ENCODE measurements at regions of chr1 and their contacts with region 1.

Region 1: DNA sequence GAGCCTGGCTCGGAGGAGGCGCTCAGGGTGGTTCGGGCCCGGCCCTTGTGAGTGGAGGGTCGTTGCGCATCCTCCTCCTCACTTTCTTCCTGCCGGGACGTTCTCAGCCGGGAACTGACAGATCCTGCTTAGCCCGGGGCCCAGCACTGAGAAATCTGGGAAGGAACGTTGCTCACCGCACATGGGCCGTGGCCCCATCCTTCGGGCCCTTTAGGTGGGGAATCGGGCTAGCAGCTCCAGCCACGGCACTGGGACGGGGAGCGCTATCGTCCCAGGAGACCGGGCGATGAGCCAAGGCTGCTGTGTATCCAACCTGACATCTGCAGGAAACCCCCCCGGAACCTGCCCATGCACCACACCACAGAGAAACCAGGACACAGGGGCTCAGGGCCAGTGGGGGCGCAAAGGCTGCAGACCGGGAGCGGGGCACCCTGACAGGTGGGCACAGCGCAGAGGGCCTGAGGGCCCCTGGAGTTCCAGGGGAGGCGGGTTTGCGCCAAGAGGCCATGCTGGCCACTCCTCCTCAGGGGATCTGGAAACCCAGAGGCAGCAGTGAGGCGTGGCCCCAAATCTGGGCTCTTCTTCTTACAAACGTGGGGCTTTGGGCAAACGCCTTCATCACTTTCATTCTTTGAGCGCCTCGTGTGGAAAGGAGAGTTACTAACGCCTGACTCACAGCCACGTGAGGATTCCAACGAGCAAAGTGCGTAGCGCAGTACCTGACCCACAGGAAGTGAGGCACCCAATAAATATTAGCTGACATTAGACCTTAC is at the start of gene SH2D5:
- DNase-seq: peak in 8 of 9 donors; percentile 21 to 62 (median 47)
- ATAC-seq: peak; percentile 85
- H3K4me3 ChIP-seq: peak within 1 kb of the TSS; percentile 63
- H3K4me3 Mint-ChIP-seq: peak within 1 kb of the TSS; percentile 86 to 95 (median 88)
- H3K27ac ChIP-seq: no peak within 1 kb of the TSS
- H3K27ac Mint-ChIP-seq: peak within 1 kb of the TSS in 6 of 9 donors; percentile 28 to 83 (median 60)
- H3K4me1 ChIP-seq: peaks cover 8 to 14% of the 10 kb centered on the region in 2 donors
- H3K4me1 Mint-ChIP-seq: peaks cover 10 to 23% (median 17%) of the 10 kb centered on the region in 7 donors
- H3K27me3 ChIP-seq: peaks cover 0 to 8% of the 10 kb centered on the region in 2 donors
- H3K27me3 Mint-ChIP-seq: peaks cover 10 to 49% (median 21%) of the 10 kb centered on the region in 5 donors
- total RNA-seq, gene SH2D5: 0.35 TPM in 2 of 5 experiments, not detected in the others

Region 2: DNA sequence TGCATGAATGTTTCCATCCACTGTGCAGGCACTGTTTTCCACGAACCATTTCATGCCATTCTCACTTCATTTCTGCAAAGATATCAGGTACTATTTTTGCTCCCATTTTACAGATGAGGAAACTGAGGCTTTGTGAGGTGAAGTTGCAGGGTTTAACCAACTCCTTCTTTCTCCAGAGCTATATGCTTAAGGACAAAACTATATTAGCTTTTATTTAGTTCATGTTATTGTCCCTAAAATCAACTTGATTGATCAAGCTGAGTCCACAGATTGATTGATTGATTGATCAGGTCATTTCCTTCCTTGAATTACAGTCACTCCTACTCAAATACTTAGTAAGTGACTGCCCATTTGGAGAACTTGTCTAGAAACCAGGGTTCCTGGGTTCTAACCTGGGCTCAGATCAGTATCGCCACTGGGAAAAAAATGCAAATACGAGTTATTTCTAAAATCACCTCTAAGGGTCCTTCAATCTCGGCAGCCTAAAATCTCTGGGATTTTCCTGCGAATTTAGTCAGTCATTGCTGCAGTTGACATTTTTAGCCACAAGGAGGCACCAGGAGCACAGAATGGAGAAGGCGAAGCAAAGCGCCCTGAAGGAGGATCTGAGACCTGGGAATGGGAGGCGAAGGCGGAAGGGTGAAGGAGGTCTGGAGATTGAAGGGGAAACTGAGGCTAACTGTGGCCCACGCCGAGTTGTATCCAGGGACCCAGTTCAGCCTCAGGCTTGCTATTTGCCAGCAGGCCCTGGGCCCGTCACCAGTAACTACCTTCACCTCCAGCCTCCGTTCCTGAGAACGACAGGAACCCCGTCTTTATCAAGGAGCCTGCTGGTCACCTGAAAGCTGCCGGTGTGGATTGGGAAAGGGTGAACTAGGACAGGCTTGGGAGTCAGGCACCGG is 210.6 kb before region 1 on chr1:
- CTCF ChIA-PET with region 1: no interaction called
- POLR2A ChIA-PET with region 1: no interaction called
- intact Hi-C with region 1: loop called in 1 of 2 experiments (anchors 2 kb)
- DNase-seq: peak; percentile 28 to 64 (median 55)
- ATAC-seq: peak; percentile 67
- H3K4me3 ChIP-seq: no peak overlapping the region
- H3K4me3 Mint-ChIP-seq: no peak overlapping the region
- H3K27ac ChIP-seq: no peak overlapping the region
- H3K27ac Mint-ChIP-seq: peak overlapping the region in 1 of 9 donors; percentile 44
- H3K4me1 ChIP-seq: no peaks in the 10 kb centered on the region
- H3K4me1 Mint-ChIP-seq: peaks cover 0 to 4% (median 0%) of the 10 kb centered on the region in 7 donors
- H3K27me3 ChIP-seq: peaks cover 0 to 3% of the 10 kb centered on the region in 2 donors
- H3K27me3 Mint-ChIP-seq: peaks cover 7 to 25% (median 22%) of the 10 kb centered on the region in 5 donors

Region 3: DNA sequence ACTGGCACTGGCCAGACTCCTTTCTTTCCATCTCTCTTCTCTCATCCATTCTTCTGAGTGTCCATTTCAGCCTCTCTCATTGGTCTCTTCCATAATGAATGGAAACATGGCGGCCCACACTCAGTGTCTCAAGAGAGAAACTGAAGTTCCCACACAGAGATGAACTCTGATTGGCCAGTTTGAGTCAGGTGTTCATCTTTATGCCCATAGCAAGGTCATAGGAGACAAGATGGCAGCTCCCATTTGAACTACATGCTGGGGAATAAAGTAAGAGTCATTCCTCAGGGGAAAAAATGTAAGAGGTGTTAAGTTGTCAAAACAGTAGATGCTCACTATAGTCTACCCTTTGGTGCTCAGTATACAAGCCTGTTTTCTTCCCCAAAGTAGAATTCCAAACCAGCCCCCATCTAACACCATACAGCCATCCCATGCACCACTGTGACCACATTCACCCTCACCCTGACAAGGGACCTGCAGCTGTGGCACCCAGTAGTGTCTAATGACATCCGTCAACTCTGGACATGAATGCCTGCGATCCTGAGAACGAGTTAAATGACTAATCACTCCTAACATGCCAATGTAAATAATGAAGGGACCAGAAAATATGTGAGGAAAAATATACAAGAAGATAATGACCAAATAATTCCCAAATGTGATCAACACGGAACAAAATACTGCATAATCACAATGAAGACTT is 131.5 kb before region 1 on chr1:
- CTCF ChIA-PET with region 1: no interaction called
- POLR2A ChIA-PET with region 1: no interaction called
- intact Hi-C with region 1: no loop called
- DNase-seq: no peak
- ATAC-seq: no peak
- H3K4me3 ChIP-seq: no peak overlapping the region
- H3K4me3 Mint-ChIP-seq: no peak overlapping the region
- H3K27ac ChIP-seq: no peak overlapping the region
- H3K27ac Mint-ChIP-seq: no peak overlapping the region
- H3K4me1 ChIP-seq: no peaks in the 10 kb centered on the region
- H3K4me1 Mint-ChIP-seq: peaks cover 0 to 2% (median 0%) of the 10 kb centered on the region in 7 donors
- H3K27me3 ChIP-seq: no peaks in the 10 kb centered on the region
- H3K27me3 Mint-ChIP-seq: peaks cover 0 to 10% (median 5%) of the 10 kb centered on the region in 5 donors

Region 4: DNA sequence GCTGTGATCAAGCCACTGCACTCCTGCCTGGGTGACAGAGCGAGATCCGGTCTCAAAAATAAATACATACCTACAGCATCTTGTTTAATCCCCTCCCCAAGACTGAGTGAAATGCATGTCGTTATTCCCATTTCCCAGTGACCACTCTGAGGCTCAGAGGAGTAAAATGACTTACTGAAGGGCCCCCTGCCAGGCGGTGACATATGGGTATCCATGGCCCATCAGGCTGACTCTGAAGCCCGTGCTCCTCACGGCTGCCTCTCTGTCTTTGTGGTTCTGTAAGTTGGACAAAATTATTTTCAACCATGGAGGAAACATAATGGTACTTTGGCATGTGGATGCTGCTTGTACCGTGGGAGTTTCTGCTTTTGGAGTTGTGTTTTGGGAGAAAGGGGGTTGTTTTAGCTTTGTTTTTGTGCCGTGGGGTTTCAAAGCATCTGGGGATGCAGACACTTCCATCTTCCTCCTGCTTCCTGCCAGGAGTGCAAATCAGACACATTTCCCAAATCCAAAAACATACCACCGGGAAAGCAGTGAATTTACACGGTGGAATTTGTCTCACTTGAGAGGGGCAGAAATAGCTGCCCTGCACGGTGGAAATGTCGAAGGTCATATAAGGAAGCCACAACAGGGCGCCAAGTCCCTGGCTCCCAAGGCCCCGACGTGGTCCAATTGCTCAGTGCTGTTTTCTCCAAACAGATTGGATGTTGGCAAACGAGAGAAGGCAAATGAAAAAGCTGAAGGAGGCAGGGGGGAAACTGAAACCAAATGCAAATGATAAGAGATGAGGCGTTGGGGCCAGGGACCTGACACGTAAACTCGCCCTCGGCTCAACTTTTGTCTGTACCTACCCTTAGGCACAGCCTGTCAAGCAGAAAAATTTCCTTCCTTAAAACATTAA is 116.6 kb before region 1 on chr1:
- CTCF ChIA-PET with region 1: no interaction called
- POLR2A ChIA-PET with region 1: no interaction called
- intact Hi-C with region 1: no loop called
- DNase-seq: no peak
- ATAC-seq: no peak
- H3K4me3 ChIP-seq: no peak overlapping the region
- H3K4me3 Mint-ChIP-seq: peak overlapping the region in 1 of 10 donors; percentile 22
- H3K27ac ChIP-seq: no peak overlapping the region
- H3K27ac Mint-ChIP-seq: no peak overlapping the region
- H3K4me1 ChIP-seq: no peaks in the 10 kb centered on the region
- H3K4me1 Mint-ChIP-seq: peaks cover 0 to 8% (median 0%) of the 10 kb centered on the region in 7 donors
- H3K27me3 ChIP-seq: no peaks in the 10 kb centered on the region
- H3K27me3 Mint-ChIP-seq: peaks cover 0 to 17% (median 7%) of the 10 kb centered on the region in 5 donors

Region 5: GRCh38 chr1:20661207-20662109 is 71.3 kb before region 1 on chr1 and contains the start of gene DDOST:
- CTCF ChIA-PET with region 1: no interaction called
- POLR2A ChIA-PET with region 1: interaction called, 3 read pairs
- intact Hi-C with region 1: loop called in 1 of 2 experiments (anchors 1 kb)
- DNase-seq: peak; percentile 78 to 96 (median 94)
- ATAC-seq: peak; percentile 98
- H3K4me3 ChIP-seq: peak within 1 kb of the TSS; percentile 93
- H3K4me3 Mint-ChIP-seq: peak within 1 kb of the TSS; percentile 89 to 99 (median 96)
- H3K27ac ChIP-seq: peak within 1 kb of the TSS; percentile 87
- H3K27ac Mint-ChIP-seq: peak within 1 kb of the TSS; percentile 85 to 99 (median 98)
- H3K4me1 ChIP-seq: peaks cover 21 to 24% of the 10 kb centered on the region in 2 donors
- H3K4me1 Mint-ChIP-seq: peaks cover 31 to 60% (median 41%) of the 10 kb centered on the region in 7 donors
- H3K27me3 ChIP-seq: no peaks in the 10 kb centered on the region
- H3K27me3 Mint-ChIP-seq: no peaks in the 10 kb centered on the region
- total RNA-seq, gene DDOST: 96.9 to 173 (median 109) TPM

Region 6: GRCh38 chr1:20696397-20697329 is 36.1 kb before region 1 on chr1:
- CTCF ChIA-PET with region 1: interaction called, 7 read pairs
- POLR2A ChIA-PET with region 1: no interaction called
- intact Hi-C with region 1: loop called (anchors 1 kb)
- DNase-seq: peak; percentile 38 to 73 (median 65)
- ATAC-seq: peak; percentile 96
- H3K4me3 ChIP-seq: peak overlapping the region; percentile 89
- H3K4me3 Mint-ChIP-seq: peak overlapping the region; percentile 81 to 91 (median 89)
- H3K27ac ChIP-seq: peak overlapping the region; percentile 40
- H3K27ac Mint-ChIP-seq: peak overlapping the region in 4 of 9 donors; percentile 38 to 77 (median 70)
- H3K4me1 ChIP-seq: peaks cover 0 to 5% of the 10 kb centered on the region in 2 donors
- H3K4me1 Mint-ChIP-seq: peaks cover 3 to 8% (median 4%) of the 10 kb centered on the region in 7 donors
- H3K27me3 ChIP-seq: no peaks in the 10 kb centered on the region
- H3K27me3 Mint-ChIP-seq: peaks cover 0 to 7% (median 0%) of the 10 kb centered on the region in 5 donors

Region 7: DNA sequence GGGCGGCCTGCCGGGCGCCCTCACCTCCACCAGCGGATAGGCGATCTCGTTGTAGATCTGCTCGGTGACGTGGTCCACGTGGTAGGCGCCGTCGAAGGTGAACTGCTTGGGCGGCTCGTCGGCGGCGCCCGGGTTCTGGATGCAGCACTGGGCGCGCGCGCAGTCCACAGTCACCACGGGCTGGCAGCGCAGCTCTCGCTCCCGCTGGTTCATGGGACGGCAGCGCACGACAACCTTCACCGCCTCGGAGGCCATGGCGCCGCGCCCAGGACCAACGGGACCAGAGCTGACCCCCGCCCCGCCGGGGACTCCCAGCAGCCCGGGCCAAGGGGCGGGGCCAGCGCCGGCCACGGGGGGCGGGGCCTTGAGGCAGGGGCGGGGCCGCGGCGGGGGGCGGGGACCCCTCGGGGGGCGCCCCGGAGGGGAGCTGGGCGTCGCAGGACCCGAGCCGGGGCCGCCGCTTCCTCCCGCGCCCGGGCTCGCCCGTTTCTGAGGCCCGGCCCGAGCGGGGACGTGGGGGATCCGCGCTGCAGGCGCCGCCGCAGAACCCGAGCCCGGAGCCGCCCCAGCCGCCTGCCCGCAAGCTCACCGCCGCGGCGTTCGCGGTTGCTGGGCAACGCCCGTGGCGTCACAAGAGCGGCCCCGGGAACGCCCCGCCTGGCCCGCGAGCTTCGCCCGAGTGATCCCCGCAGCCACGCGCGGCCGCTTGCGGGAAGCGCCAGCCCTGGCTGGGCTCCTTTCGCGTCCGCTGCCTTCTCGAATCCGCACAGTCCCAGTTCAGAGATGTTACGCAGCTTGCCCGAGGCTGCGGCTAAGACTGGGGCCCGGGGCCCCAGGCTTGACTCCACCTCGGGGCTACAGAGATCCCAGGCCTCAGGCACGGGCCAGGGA is 15.1 kb before region 1 on chr1 and contains the start of gene KIF17:
- CTCF ChIA-PET with region 1: no interaction called
- POLR2A ChIA-PET with region 1: no interaction called
- intact Hi-C with region 1: loop called in 1 of 2 experiments (anchors 2 kb)
- DNase-seq: peak; percentile 39 to 74 (median 62)
- ATAC-seq: peak; percentile 79
- H3K4me3 ChIP-seq: no peak within 1 kb of the TSS
- H3K4me3 Mint-ChIP-seq: peak within 1 kb of the TSS; percentile 55 to 85 (median 72)
- H3K27ac ChIP-seq: no peak within 1 kb of the TSS
- H3K27ac Mint-ChIP-seq: peak within 1 kb of the TSS in 4 of 9 donors; percentile 25 to 74 (median 50)
- H3K4me1 ChIP-seq: peaks cover 0 to 3% of the 10 kb centered on the region in 2 donors
- H3K4me1 Mint-ChIP-seq: peaks cover 0 to 11% (median 8%) of the 10 kb centered on the region in 7 donors
- H3K27me3 ChIP-seq: no peaks in the 10 kb centered on the region
- H3K27me3 Mint-ChIP-seq: peaks cover 16 to 39% (median 22%) of the 10 kb centered on the region in 5 donors
- total RNA-seq, gene KIF17: not detected

Region 8: GRCh38 chr1:20775700-20776099 is 42.9 kb after region 1 on chr1:
- CTCF ChIA-PET with region 1: no interaction called
- POLR2A ChIA-PET with region 1: no interaction called
- intact Hi-C with region 1: no loop called
- DNase-seq: no peak
- ATAC-seq: no peak
- H3K4me3 ChIP-seq: no peak overlapping the region
- H3K4me3 Mint-ChIP-seq: no peak overlapping the region
- H3K27ac ChIP-seq: no peak overlapping the region
- H3K27ac Mint-ChIP-seq: peak overlapping the region in 1 of 9 donors; percentile 41
- H3K4me1 ChIP-seq: peaks cover 0 to 2% of the 10 kb centered on the region in 2 donors
- H3K4me1 Mint-ChIP-seq: peaks cover 11 to 46% (median 39%) of the 10 kb centered on the region in 7 donors
- H3K27me3 ChIP-seq: no peaks in the 10 kb centered on the region
- H3K27me3 Mint-ChIP-seq: no peaks in the 10 kb centered on the region

Region 9: DNA sequence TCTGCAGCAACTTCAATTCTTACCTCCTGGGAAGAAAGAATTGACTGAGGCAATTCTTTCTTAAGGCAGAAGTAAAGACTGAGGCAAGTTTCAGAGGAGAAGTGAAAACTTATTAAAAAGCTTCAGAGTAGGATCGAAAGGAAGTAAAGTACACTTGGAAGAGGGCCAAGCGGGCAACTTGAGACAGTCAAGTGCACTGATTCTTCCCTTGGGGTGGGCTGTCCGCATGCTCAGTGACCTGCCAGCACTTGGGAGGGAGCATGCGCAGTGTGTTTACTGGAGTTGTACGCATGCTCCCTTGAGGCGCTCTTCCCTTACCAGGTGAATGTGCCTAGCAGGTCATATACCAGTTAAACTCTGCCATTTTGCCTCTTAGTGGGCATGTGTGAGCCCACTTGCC is 651.8 kb after region 1 on chr1:
- CTCF ChIA-PET with region 1: no interaction called
- POLR2A ChIA-PET with region 1: no interaction called
- intact Hi-C with region 1: no loop called
- DNase-seq: no peak
- ATAC-seq: no peak
- H3K4me3 ChIP-seq: no peak overlapping the region
- H3K4me3 Mint-ChIP-seq: no peak overlapping the region
- H3K27ac ChIP-seq: no peak overlapping the region
- H3K27ac Mint-ChIP-seq: no peak overlapping the region
- H3K4me1 ChIP-seq: no peaks in the 10 kb centered on the region
- H3K4me1 Mint-ChIP-seq: peaks cover 0 to 2% (median 0%) of the 10 kb centered on the region in 7 donors
- H3K27me3 ChIP-seq: no peaks in the 10 kb centered on the region
- H3K27me3 Mint-ChIP-seq: peaks cover 8 to 26% (median 21%) of the 10 kb centered on the region in 5 donors

Measured in naive thymus-derived CD4-positive, alpha-beta T cell (primary cell).